Endothelial cell of umbilical vein (primary cell): ENCODE measurements at regions of chr4 and their contacts with region 1.

Region 1: DNA sequence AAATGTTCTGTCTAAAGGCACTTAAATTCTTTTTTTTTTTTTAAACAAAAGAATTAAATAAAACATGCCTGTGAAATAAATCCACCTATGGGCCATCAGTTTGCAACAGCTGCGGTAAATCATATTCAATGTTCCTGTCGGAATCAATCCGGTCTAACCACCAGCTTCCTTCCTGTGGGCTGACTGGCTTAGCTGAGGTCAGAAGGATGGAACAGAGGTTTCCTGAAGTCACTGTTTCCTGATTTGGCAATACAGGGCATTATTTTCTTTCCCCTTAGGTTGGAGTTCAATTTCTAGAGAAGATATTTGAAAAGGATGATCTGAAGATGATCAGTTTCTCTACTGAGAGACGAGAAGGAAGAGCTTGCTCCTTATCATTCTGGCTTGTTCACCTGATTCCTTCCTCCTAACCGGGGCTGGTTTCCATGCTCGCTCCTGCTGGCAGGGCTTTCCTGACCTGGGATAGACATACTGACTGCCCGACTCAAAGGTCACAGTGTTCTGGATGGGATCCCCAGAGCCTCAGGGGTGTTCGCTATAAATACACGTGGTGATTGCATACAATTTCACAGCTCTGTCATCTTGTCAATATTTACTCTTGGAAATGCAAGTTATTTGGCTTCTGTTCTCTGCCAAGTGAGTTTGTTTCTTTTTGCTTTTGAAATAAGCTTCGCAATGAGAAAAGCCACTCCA is 21.7 kb downstream of the PDLIM3 start:
- DNase-seq: peak; percentile 86
- H3K4me3 ChIP-seq: peak overlapping the region in 1 of 3 experiments; percentile 10
- H3K27ac ChIP-seq: peak overlapping the region; percentile 85
- H3K4me1 ChIP-seq: peaks cover 24% of the 10 kb centered on the region
- H3K27me3 ChIP-seq: no peaks in the 10 kb centered on the region
- CTCF ChIP-seq: no peak
- POLR2A ChIP-seq: no peak

Region 2: DNA sequence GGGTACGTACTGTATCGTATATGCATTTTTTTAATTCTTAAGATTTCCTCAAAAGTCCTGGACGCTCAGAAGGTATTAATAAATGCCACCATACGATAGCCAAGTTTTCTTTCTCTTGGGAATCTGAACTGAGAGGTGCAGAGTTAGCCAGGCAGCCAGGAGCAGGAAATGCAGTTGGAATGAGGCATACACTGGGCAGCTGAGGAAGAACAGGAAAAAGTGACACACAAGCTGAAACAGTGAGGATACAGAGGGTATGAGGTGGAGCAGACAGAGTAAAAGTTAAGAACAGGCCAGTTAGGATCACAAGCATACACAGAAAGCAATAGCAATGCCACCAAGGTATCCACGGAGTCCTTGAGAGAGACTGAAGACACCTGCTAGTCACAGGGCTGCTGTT is 101.2 kb before region 1 on chr4:
- CTCF ChIA-PET with region 1: no interaction called
- POLR2A ChIA-PET with region 1: no interaction called
- dilution Hi-C with region 1: no loop called
- intact Hi-C with region 1: no loop called
- DNase-seq: peak; percentile 88
- H3K4me3 ChIP-seq: no peak overlapping the region
- H3K27ac ChIP-seq: peak overlapping the region; percentile 87
- H3K4me1 ChIP-seq: peaks cover 21% of the 10 kb centered on the region
- H3K27me3 ChIP-seq: no peaks in the 10 kb centered on the region
- CTCF ChIP-seq: no peak
- POLR2A ChIP-seq: no peak

Region 3: DNA sequence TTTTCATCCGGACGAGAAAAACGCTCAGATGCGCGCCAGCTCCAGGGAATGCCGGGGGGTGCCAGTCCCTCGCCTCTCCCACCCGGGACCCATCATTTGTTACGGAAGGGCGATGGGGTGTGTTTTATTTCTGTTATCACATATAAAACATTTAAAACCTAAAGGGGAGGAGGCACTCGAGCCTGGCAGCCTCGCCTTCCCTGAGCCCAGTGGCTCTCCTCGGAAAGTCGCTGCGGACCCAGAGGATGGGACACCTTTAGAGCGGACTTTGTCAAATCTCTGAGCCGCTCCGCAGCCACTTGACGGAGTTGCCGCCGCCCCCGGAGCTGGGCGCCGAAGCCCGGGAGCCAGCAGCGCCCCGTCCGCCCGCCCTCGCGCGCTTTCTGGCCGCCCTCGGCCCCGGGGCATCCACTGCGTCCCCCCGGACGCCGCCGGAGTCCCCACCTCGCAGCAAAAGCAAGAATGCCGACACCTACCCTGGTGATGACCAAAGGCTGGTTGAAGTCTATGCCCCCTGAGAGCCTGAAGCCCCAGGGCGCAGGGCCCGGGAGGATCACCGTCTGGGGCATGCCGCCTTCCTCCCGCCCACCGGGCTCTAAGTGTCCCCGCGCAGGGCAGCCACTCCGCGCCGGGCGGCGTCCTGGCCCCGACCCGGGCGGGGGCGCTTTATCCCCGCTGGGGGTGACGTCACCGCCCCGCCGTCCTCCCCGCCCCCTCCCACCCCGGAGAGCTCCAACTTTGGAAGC is 21.4 kb after region 1 on chr4 and contains the start of gene PDLIM3:
- CTCF ChIA-PET with region 1: interaction called, 24 read pairs
- POLR2A ChIA-PET with region 1: interaction called, 12 read pairs
- dilution Hi-C with region 1: no loop called
- intact Hi-C with region 1: loop called (anchors 1 kb)
- DNase-seq: peak; percentile 65
- H3K4me3 ChIP-seq: peak within 1 kb of the TSS; percentile 78 to 83 (median 81)
- H3K27ac ChIP-seq: peak within 1 kb of the TSS; percentile 56
- H3K4me1 ChIP-seq: peaks cover 10% of the 10 kb centered on the region
- H3K27me3 ChIP-seq: peaks cover 0 to 6% of the 10 kb centered on the region in 2 experiments
- CTCF ChIP-seq: no peak
- POLR2A ChIP-seq: peak; percentile 53
- total RNA-seq, gene PDLIM3: 9.7 and 12.2 TPM in 2 replicates

Region 4: DNA sequence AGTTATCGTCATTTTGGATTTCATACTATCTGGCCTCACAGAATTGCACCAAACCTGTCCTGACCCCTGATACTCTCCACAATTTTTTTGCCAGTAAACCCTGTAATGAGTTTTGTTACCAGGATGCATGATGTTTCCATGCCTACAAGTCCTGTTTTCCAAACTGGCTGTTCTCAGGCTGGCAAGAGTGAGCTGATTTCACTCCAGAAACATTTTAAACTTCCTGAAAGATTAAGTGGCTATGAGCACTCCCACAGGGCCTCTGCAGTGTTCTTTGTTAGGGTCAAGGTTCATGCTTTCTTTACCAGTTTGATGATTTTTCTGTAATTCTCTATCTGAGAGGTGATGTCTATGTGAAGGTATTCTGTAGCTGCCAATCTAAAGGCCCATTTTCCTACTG is 53.3 kb after region 1 on chr4:
- CTCF ChIA-PET with region 1: interaction called, 3 read pairs
- POLR2A ChIA-PET with region 1: interaction called, 3 read pairs
- dilution Hi-C with region 1: no loop called
- intact Hi-C with region 1: loop called (anchors 2 kb)
- DNase-seq: peak; percentile 93
- H3K4me3 ChIP-seq: no peak overlapping the region
- H3K27ac ChIP-seq: peak overlapping the region; percentile 87
- H3K4me1 ChIP-seq: peaks cover 17% of the 10 kb centered on the region
- H3K27me3 ChIP-seq: no peaks in the 10 kb centered on the region
- CTCF ChIP-seq: no peak
- POLR2A ChIP-seq: no peak

Region 5: GRCh38 chr4:185573651-185574199 is 60.1 kb after region 1 on chr4:
- CTCF ChIA-PET with region 1: interaction called, 3 read pairs
- POLR2A ChIA-PET with region 1: no interaction called
- dilution Hi-C with region 1: no loop called
- intact Hi-C with region 1: loop called (anchors 1 kb)
- DNase-seq: peak; percentile 84
- H3K4me3 ChIP-seq: no peak overlapping the region
- H3K27ac ChIP-seq: peak overlapping the region; percentile 75
- H3K4me1 ChIP-seq: peaks cover 13% of the 10 kb centered on the region
- H3K27me3 ChIP-seq: no peaks in the 10 kb centered on the region
- CTCF ChIP-seq: no peak
- POLR2A ChIP-seq: peak; percentile 45

Region 6: GRCh38 chr4:185833055-185833598 is 319.5 kb after region 1 on chr4:
- CTCF ChIA-PET with region 1: no interaction called
- POLR2A ChIA-PET with region 1: no interaction called
- dilution Hi-C with region 1: no loop called
- intact Hi-C with region 1: loop called (anchors 1 kb)
- DNase-seq: peak; percentile 92
- H3K4me3 ChIP-seq: no peak overlapping the region
- H3K27ac ChIP-seq: peak overlapping the region; percentile 67
- H3K4me1 ChIP-seq: peaks cover 26% of the 10 kb centered on the region
- H3K27me3 ChIP-seq: no peaks in the 10 kb centered on the region
- CTCF ChIP-seq: no peak
- POLR2A ChIP-seq: no peak